ENCODE measurements at regions of chr1 and their contacts with region 1.

Region 1: DNA sequence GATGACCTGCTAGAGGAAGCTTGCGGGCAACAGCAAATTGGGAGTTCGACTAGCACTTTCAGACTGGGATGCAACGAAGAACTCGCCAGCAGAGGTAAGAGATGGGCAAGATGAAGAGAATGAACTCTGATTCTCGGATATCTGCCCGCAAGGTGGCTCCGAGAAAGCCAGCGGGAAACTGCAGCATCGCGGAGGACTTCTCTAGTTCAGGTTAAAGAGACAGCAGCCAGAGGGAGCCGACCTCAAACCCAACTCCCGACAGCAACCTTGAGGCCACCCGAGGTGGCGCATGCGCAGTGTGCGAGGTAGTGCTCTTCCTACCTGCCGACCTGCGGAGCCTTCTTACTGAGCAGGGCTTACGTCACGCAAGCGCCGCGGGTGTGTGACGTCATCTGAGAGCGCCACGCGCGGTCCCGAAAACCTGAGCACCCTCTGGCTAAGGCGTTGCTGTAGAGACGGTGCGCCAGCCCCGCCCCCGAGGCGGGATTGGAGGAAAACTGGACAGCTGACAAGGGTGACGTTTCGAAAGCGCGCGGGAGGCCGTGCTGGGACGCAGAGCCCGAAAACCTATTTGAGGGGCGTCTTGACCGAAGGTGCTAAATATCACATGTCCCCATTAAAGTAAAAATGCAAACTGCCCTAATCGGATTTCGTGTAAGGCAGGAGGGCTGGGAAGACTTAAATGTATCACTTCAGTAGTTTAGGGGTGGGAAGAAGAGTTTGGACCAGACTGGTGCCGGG is 110.5 kb upstream of the SLC25A33 start:
- DNase-seq: peak; percentile 100
- H3K4me3 Mint-ChIP-seq: peak overlapping the region; percentile 91
- H3K27ac Mint-ChIP-seq: peak overlapping the region; percentile 95
- H3K4me1 Mint-ChIP-seq: peaks cover 38% of the 10 kb centered on the region
- H3K27me3 Mint-ChIP-seq: peaks cover 7% of the 10 kb centered on the region

Region 2: GRCh38 chr1:9275567-9276034 is 153.2 kb before region 1 on chr1:
- intact Hi-C with region 1: loop called (anchors 2 kb)
- DNase-seq: peak; percentile 58
- H3K4me3 Mint-ChIP-seq: no peak overlapping the region
- H3K27ac Mint-ChIP-seq: peak overlapping the region; percentile 25
- H3K4me1 Mint-ChIP-seq: peaks cover 33% of the 10 kb centered on the region
- H3K27me3 Mint-ChIP-seq: no peaks in the 10 kb centered on the region

Region 3: GRCh38 chr1:9413148-9413876 is 15.5 kb before region 1 on chr1:
- intact Hi-C with region 1: loop called (anchors 1 kb)
- DNase-seq: peak; percentile 58
- H3K4me3 Mint-ChIP-seq: no peak overlapping the region
- H3K27ac Mint-ChIP-seq: peak overlapping the region; percentile 48
- H3K4me1 Mint-ChIP-seq: peaks cover 36% of the 10 kb centered on the region
- H3K27me3 Mint-ChIP-seq: peaks cover 4% of the 10 kb centered on the region

Region 4: DNA sequence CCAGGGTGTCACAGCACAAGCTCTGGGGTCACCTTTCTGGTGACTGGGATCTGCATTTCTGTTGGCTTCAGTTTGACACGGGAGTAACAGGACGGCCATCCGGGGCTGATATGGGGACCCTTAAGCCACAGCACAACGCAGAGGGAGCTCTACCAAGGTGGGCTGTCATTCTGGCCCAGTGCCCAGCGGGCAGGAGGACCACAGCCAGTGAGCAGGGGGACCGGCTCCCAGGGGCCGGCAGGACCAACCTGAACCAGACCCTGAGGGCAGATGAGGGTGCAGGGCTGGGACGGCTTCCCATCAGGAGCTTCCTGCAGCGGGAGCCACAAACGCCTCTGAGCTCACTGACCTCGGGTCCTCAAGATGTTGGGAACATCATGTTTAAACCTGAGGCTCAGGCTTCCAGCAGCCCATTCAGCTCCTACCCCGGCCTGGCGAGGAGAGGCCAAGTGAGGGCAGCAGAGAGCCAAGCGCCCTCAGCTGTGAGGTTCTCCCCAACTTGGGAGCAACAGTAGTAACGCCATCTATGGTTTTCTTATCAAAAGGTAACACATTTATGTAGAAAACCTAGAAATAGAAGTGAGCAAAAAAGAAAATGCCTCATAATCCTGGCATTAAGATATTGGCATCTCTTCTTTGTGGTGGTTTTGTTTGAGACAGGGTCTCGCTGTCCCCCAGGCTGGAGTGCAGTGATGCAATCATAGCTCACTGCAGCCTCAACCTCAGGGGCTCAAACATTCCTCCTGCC is 186.7 kb after region 1 on chr1:
- intact Hi-C with region 1: no loop called
- DNase-seq: peak; percentile 43
- H3K4me3 Mint-ChIP-seq: no peak overlapping the region
- H3K27ac Mint-ChIP-seq: no peak overlapping the region
- H3K4me1 Mint-ChIP-seq: peaks cover 1% of the 10 kb centered on the region
- H3K27me3 Mint-ChIP-seq: no peaks in the 10 kb centered on the region